ENCODE measurements at regions of chr12 and their contacts with region 1.

Region 1: GRCh38 chr12:65656904-65657351 is 167.4 kb upstream of the HMGA2 start:
- DNase-seq: peak; percentile 89
- H3K4me3 ChIP-seq: no peak overlapping the region
- H3K27ac ChIP-seq: peak overlapping the region; percentile 100
- H3K4me1 ChIP-seq: peaks cover 66% of the 10 kb centered on the region
- H3K27me3 ChIP-seq: no peaks in the 10 kb centered on the region
- CTCF ChIP-seq: no peak
- POLR2A ChIP-seq: peak; percentile 70

Region 2: GRCh38 chr12:65536876-65537661 is 119.9 kb before region 1 on chr12:
- CTCF ChIA-PET with region 1: no interaction called
- POLR2A ChIA-PET with region 1: no interaction called
- dilution Hi-C with region 1: no loop called
- intact Hi-C with region 1: loop called (anchors 2 kb)
- DNase-seq: peak; percentile 94
- H3K4me3 ChIP-seq: no peak overlapping the region
- H3K27ac ChIP-seq: peak overlapping the region; percentile 98
- H3K4me1 ChIP-seq: peaks cover 58% of the 10 kb centered on the region
- H3K27me3 ChIP-seq: no peaks in the 10 kb centered on the region
- CTCF ChIP-seq: no peak
- POLR2A ChIP-seq: peak; percentile 45

Region 3: DNA sequence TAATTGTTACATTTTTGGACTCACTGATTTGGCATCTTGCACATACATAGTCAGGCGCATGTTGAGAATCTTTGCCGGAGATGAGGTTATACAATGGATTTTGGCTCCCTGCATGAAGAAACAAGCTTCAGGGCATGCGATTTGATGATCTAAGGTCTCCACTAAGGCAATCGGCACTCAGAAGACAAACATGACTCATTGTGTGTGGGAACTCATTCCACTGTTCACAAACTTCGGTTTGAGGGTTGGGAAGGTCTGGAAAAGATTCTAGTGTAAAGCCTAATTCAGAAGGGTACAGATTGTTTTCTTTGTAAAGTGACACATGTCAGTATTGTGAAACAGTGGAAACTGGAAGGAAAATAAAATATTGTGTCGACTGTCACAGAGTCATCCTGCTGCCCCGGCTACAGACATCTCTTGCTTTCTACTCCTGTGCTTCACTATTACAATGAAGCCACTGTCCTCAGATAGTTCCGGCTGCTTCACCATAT is 25.3 kb before region 1 on chr12:
- CTCF ChIA-PET with region 1: interaction called, 7 read pairs
- POLR2A ChIA-PET with region 1: no interaction called
- dilution Hi-C with region 1: no loop called
- intact Hi-C with region 1: loop called (anchors 1 kb)
- DNase-seq: peak; percentile 94
- H3K4me3 ChIP-seq: no peak overlapping the region
- H3K27ac ChIP-seq: peak overlapping the region; percentile 87
- H3K4me1 ChIP-seq: peaks cover 56% of the 10 kb centered on the region
- H3K27me3 ChIP-seq: no peaks in the 10 kb centered on the region
- CTCF ChIP-seq: no peak
- POLR2A ChIP-seq: peak; percentile 49

Region 4: DNA sequence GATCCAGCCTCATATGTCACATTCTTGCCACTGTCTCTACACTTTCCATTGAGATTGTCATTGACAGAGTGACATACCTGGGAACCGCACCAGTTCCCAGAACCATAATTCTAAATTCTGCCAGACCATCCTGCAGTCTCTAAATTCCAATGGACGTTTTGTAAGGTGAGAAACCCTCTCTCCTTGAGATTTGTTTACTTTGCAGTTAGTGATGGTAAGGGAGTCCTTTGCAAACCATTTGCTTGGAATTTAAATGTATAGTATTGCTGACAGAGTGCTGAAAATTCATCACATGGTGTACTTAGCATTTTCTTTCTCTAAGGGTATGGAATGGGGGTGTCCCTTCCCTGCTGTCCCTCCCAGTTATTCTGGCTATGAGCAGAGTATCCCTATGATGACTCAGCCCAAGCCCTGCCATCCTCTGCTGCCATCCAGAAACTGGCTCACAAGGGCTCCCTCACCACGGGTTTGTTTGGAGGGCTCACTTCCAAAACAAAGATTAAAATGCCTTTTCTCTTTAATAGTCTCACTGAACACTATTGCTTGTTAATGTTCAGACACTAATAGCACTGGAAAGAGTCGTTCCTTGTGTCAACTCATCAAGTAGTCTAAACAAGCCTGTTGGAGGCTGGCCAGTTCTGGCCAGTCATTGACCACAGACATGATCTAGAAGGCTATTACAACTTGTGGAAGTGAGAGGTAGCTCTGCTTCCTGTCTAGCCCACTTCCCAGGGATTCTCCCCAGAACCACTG is 38.4 kb after region 1 on chr12:
- CTCF ChIA-PET with region 1: interaction called, 4 read pairs
- POLR2A ChIA-PET with region 1: no interaction called
- dilution Hi-C with region 1: no loop called
- intact Hi-C with region 1: loop called (anchors 1 kb)
- DNase-seq: peak; percentile 94
- H3K4me3 ChIP-seq: no peak overlapping the region
- H3K27ac ChIP-seq: peak overlapping the region; percentile 88
- H3K4me1 ChIP-seq: peaks cover 31% of the 10 kb centered on the region
- H3K27me3 ChIP-seq: no peaks in the 10 kb centered on the region
- CTCF ChIP-seq: no peak
- POLR2A ChIP-seq: peak; percentile 35

Region 5: GRCh38 chr12:65853489-65854370 is 196.8 kb after region 1 on chr12:
- CTCF ChIA-PET with region 1: no interaction called
- POLR2A ChIA-PET with region 1: interaction called, 11 read pairs
- dilution Hi-C with region 1: no loop called
- intact Hi-C with region 1: no loop called
- DNase-seq: peak; percentile 62
- H3K4me3 ChIP-seq: no peak overlapping the region
- H3K27ac ChIP-seq: peak overlapping the region; percentile 70
- H3K4me1 ChIP-seq: peaks cover 52% of the 10 kb centered on the region
- H3K27me3 ChIP-seq: no peaks in the 10 kb centered on the region
- CTCF ChIP-seq: no peak
- POLR2A ChIP-seq: no peak